ENCODE measurements at regions of chr1 and their contacts with region 1.

Region 1: DNA sequence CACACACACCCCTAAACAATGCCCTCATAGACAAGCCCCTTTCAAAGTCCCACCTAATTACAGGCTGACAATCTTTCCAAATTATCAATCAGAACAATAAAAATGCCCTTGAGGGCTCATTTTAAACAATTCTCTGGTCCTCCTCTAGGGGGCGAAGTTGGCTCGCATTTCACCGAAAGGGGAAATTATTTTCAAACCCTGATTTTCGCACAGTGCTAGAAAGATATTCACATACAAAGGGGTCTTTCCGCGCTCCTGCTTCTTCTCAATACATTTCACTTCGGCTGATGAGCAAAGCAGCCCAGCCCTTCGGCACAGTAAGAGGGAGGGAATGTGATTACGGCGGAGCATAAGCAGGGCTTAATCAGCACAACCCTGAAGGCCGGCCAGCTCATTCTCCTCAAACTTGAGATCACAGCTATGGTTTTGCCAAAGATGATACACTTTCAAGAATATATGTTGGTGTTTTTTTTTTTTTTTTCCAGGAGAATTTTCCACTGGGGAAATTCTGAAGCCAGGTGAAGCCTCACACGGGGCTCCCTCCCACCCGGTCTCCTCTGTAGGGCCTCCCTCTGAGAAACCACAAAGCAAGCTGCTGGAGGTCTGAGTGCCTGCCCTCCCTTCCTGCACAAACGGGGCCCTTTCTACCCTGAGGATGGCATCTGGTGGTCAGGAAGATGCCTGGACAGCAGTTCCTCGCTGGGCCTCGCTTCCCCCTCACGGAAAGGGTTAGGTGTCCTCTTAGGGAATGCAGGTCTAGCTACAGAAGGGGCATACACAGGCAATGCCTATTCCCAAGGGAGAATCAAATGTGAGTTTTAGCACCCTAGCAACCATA is 66.9 kb downstream of the GNG12 start:
- DNase-seq: no peak
- H3K4me3 Mint-ChIP-seq: no peak overlapping the region
- H3K27ac Mint-ChIP-seq: no peak overlapping the region
- H3K4me1 Mint-ChIP-seq: peaks cover 27% of the 10 kb centered on the region
- H3K27me3 Mint-ChIP-seq: peaks cover 34% of the 10 kb centered on the region

Region 2: GRCh38 chr1:67700692-67701410 is 65.5 kb before region 1 on chr1:
- intact Hi-C with region 1: no loop called
- DNase-seq: no peak
- H3K4me3 Mint-ChIP-seq: no peak overlapping the region
- H3K27ac Mint-ChIP-seq: peak overlapping the region; percentile 20
- H3K4me1 Mint-ChIP-seq: peaks cover 16% of the 10 kb centered on the region
- H3K27me3 Mint-ChIP-seq: peaks cover 8% of the 10 kb centered on the region

Region 3: GRCh38 chr1:67732750-67733151 is 33.6 kb before region 1 on chr1:
- intact Hi-C with region 1: no loop called
- DNase-seq: peak; percentile 4
- H3K4me3 Mint-ChIP-seq: no peak overlapping the region
- H3K27ac Mint-ChIP-seq: no peak overlapping the region
- H3K4me1 Mint-ChIP-seq: peaks cover 33% of the 10 kb centered on the region
- H3K27me3 Mint-ChIP-seq: peaks cover 4% of the 10 kb centered on the region

Region 4: GRCh38 chr1:67815303-67816094 is 49.1 kb after region 1 on chr1:
- intact Hi-C with region 1: no loop called
- DNase-seq: no peak
- H3K4me3 Mint-ChIP-seq: no peak overlapping the region
- H3K27ac Mint-ChIP-seq: no peak overlapping the region
- H3K4me1 Mint-ChIP-seq: no peaks in the 10 kb centered on the region
- H3K27me3 Mint-ChIP-seq: peaks cover 13% of the 10 kb centered on the region

Region 5: GRCh38 chr1:67832737-67833601 is 66.6 kb after region 1 on chr1 and contains the start of gene GNG12:
- intact Hi-C with region 1: loop called (anchors 5 kb)
- DNase-seq: no peak
- H3K4me3 Mint-ChIP-seq: peak within 1 kb of the TSS; percentile 65
- H3K27ac Mint-ChIP-seq: no peak within 1 kb of the TSS
- H3K4me1 Mint-ChIP-seq: peaks cover 10% of the 10 kb centered on the region
- H3K27me3 Mint-ChIP-seq: peaks cover 67% of the 10 kb centered on the region
- total RNA-seq, gene GNG12: 0.08 and 0.12 TPM in 2 replicates

Region 6: DNA sequence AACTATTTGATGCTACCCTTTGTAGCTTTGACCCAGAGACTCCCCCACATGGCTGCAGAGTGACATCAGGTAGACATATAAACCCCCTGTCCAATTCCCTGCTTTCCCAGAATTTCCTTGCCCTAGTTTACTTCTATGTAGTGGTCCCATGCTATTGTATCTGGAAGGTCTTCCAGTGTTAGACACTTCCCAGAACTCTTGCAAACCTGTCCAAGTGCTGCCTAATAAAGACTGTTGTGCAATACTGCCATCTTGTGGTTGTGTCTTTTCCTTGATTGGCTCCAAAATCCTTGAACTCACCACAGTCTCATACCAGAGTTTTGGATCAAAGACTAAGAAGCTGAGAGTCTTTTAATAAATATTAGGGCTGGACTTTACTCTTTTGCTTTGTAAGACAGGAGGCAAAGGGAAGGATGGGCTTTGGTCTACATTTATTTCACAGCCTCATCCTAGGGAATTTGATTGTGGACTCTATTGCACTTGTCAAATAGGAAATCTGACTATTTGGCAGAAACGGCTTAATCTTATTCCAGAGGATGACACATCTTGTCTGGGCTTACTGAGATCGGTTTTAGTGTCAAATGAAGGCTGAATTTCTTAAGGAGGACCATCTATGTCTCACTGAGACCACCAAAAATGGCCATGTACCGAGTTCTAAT is 1971.3 kb after region 1 on chr1:
- intact Hi-C with region 1: loop called (anchors 5 kb)
- DNase-seq: peak; percentile 6
- H3K4me3 Mint-ChIP-seq: no peak overlapping the region
- H3K27ac Mint-ChIP-seq: no peak overlapping the region
- H3K4me1 Mint-ChIP-seq: no peaks in the 10 kb centered on the region
- H3K27me3 Mint-ChIP-seq: no peaks in the 10 kb centered on the region